GM10248 (cell line): ENCODE measurements at regions of chr16 and their contacts with region 1.

Region 1: GRCh38 chr16:74998481-74999218 is at the start of gene ZNRF1:
- DNase-seq: peak; percentile 94
- CTCF ChIP-seq: peak; percentile 53

Region 2: DNA sequence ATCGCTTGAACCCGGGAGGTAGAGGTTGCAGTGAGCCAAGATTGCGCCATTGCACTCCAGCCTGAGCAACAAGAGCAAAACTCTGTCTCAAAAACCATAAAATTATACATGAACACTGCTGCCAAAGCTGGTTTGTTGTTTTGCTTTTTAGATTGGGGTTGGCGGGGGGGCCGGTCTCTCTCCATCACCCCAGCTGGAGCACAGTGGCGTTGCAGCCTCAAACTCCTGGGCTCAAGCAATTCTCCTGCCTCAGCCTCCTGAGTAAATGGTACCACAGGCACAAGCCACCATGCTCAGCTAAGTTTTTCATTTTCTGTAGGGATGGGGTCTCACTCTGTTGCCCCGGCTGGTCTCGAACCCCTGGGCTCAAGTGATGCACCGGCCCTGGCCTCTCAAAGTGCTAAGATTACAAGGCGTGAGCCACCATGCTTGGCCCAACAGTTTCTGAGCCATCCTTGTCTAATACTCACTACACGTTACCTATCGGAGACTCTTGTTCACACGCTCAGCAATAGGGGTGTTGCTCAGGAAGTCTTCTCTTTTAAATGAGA is 25.4 kb before region 1 on chr16:
- CTCF ChIA-PET with region 1: no interaction called
- POLR2A ChIA-PET with region 1: no interaction called
- DNase-seq: no peak
- CTCF ChIP-seq: no peak

Region 3: GRCh38 chr16:74984535-74985296 is 13.9 kb before region 1 on chr16 and contains the start of gene WDR59:
- CTCF ChIA-PET with region 1: interaction called, 70 read pairs
- POLR2A ChIA-PET with region 1: no interaction called
- DNase-seq: peak; percentile 98
- CTCF ChIP-seq: no peak

Region 4: DNA sequence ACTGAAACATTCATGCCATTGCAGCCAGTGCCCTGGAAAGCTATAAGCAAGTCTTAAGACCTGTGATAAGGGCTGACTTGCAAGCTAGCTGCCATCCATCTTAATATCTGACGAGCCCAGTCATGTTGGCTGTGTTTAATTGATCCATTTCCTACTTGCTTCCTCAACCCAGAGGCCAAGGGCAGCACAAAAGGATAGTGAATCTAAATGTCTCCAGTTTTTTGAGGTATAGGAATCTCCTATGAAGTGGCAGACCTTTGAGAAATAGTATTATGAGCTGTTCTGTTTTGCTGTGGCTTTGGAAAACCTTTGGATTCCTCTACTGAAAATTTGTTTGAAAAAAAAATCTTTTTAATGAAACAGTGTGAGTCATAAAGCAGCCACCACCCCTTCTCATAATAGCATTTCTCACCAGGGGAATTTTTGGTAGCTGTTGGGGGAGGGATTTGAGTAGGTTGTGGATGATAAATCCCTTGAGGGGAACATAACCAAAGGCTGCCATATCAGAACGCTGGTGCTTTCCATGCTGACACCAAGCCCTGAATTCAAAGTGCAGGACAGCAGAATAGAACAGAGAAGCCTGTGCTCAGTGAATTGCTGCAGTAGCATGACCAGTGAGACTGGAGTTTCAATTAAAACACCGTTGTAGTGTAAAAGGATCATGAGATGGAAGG is 13.1 kb after region 1 on chr16:
- CTCF ChIA-PET with region 1: interaction called, 18 read pairs
- POLR2A ChIA-PET with region 1: no interaction called
- DNase-seq: peak; percentile 58
- CTCF ChIP-seq: no peak

Region 5: DNA sequence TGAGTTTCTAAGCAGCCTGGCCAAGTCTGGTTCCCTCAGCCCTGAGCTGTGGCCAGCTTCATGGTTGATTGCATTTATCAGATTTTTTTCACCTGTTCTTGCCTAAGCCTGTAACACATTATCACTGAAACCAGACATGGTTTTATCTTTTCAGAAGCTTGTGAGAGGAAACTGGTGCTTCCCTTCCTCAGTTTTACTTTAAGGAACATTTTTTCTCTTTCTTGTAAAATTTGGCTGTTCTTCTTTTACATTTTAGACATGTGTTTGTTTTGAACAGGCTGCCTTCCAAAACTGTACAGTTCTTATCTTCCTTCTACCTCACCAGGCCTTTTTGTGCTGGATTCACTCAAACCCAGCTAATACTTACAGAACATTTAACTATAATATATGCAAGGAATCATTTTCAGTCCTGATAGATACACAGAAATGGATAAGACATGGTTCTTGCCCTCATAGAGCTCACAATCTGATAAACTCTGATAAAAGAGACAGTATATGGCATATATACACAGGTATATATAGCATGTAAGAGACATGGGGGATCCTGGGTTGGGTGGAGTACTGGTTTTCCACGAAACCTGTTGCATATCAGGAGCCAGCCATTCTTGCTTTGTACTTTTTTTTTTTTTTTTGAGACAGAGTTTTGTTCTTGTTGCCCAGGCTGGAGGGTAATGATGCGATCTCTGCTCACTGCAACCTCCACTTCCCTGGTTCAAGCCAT is 44.7 kb after region 1 on chr16:
- CTCF ChIA-PET with region 1: interaction called, 15 read pairs
- POLR2A ChIA-PET with region 1: no interaction called
- DNase-seq: peak; percentile 30
- CTCF ChIP-seq: no peak